ENCODE measurements at regions of chr7 and their contacts with region 1.

Region 1: GRCh38 chr7:120052884-120053382 is 220.0 kb upstream of the KCND2 start:
- DNase-seq: peak; percentile 79 to 97
- H3K4me3 ChIP-seq: peak overlapping the region; percentile 1; the same call in 1 of the 2 replicates
- H3K27ac ChIP-seq: peak overlapping the region; percentile 70
- H3K4me1 ChIP-seq: peaks cover 45% of the 10 kb centered on the region
- H3K27me3 ChIP-seq: no peaks in the 10 kb centered on the region
- CTCF ChIP-seq: no peak

Region 2: GRCh38 chr7:119545118-119545517 is 507.8 kb before region 1 on chr7:
- CTCF ChIA-PET with region 1: no interaction called
- POLR2A ChIA-PET with region 1: no interaction called
- intact Hi-C with region 1: loop called (anchors 5 kb)
- DNase-seq: peak in 1 of 2 experiments; percentile 86
- H3K4me3 ChIP-seq: no peak overlapping the region
- H3K27ac ChIP-seq: no peak overlapping the region
- H3K4me1 ChIP-seq: 0 out of 2 replicates have a peak, but pooled peaks cover 4% of the 10 kb centered on the region
- H3K27me3 ChIP-seq: peaks cover 17% of the 10 kb centered on the region
- CTCF ChIP-seq: no peak

Region 3: GRCh38 chr7:119861385-119861784 is 191.5 kb before region 1 on chr7:
- CTCF ChIA-PET with region 1: no interaction called
- POLR2A ChIA-PET with region 1: no interaction called
- intact Hi-C with region 1: no loop called
- DNase-seq: no peak
- H3K4me3 ChIP-seq: no peak overlapping the region
- H3K27ac ChIP-seq: no peak overlapping the region
- H3K4me1 ChIP-seq: no peaks in the 10 kb centered on the region
- H3K27me3 ChIP-seq: no peaks in the 10 kb centered on the region
- CTCF ChIP-seq: no peak

Region 4: GRCh38 chr7:119935418-119936025 is 117.4 kb before region 1 on chr7:
- CTCF ChIA-PET with region 1: interaction called, 3 read pairs
- POLR2A ChIA-PET with region 1: no interaction called
- intact Hi-C with region 1: loop called (anchors 10 kb)
- DNase-seq: no peak
- H3K4me3 ChIP-seq: no peak overlapping the region
- H3K27ac ChIP-seq: no peak overlapping the region
- H3K4me1 ChIP-seq: no peaks in the 10 kb centered on the region
- H3K27me3 ChIP-seq: no peaks in the 10 kb centered on the region
- CTCF ChIP-seq: peak; percentile 70

Region 5: DNA sequence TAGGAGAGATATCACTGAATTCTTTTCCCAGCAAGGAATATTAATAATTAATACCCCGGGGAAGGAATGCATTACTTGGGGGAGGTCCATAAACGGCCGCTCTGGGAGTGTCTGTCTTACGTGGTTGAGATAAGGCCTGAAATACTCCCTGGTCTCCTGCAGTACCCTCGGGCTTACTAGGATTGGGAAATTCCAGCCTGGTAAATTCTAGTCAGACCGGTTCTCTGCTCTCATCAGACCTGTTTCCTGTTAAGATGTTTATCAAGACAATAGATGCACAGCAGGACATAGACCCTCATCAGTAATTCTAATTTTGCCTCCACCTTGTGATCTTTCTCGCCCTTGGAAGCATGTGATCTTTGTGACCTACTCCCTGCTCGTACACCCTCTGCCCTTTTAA is 57.2 kb after region 1 on chr7:
- CTCF ChIA-PET with region 1: no interaction called
- POLR2A ChIA-PET with region 1: no interaction called
- intact Hi-C with region 1: loop called (anchors 2 kb)
- DNase-seq: peak; percentile 25 to 68
- H3K4me3 ChIP-seq: no peak overlapping the region
- H3K27ac ChIP-seq: no peak overlapping the region
- H3K4me1 ChIP-seq: peaks cover 15% of the 10 kb centered on the region
- H3K27me3 ChIP-seq: no peaks in the 10 kb centered on the region
- CTCF ChIP-seq: no peak

Region 6: GRCh38 chr7:120168066-120168465 is 115.1 kb after region 1 on chr7:
- CTCF ChIA-PET with region 1: no interaction called
- POLR2A ChIA-PET with region 1: no interaction called
- intact Hi-C with region 1: loop called (anchors 1 kb)
- DNase-seq: no peak
- H3K4me3 ChIP-seq: no peak overlapping the region
- H3K27ac ChIP-seq: no peak overlapping the region
- H3K4me1 ChIP-seq: peaks cover 26% of the 10 kb centered on the region
- H3K27me3 ChIP-seq: no peaks in the 10 kb centered on the region
- CTCF ChIP-seq: no peak

Region 7: DNA sequence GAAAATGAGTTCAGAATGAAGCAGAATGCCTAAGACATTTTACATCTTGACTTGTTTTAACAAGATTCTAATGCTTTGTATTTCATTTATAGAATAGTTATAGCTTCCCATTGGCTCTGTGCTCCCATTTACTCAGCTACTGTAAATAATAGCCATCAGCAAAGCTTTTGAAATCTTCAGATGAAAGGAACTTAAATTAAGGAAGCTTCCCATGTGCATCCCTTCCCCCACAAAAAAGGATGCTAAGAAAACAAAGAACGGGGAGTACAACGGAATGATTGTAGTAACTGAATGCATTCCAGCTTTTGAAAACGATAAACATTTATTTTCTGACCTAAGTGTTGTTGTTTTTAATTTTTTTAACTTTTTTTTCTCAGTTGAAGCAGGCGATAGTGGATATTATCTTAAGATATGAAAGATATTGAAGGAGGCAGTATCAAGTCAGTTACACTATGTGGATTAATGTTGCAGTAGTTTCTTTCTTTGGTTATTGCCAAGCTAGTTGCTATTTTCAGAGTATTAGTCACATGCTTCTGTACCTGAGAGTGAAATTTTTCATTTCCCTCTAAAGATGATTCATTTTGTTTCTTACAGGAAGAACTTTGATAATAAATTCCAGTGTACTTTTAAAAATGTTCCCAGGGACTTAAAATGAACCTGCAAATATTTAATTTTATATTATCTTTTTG is 349.3 kb after region 1 on chr7:
- CTCF ChIA-PET with region 1: no interaction called
- POLR2A ChIA-PET with region 1: no interaction called
- intact Hi-C with region 1: loop called (anchors 1 kb)
- DNase-seq: peak in 1 of 2 experiments; percentile 68
- H3K4me3 ChIP-seq: no peak overlapping the region
- H3K27ac ChIP-seq: peak overlapping the region; percentile 85
- H3K4me1 ChIP-seq: peaks cover 24% of the 10 kb centered on the region
- H3K27me3 ChIP-seq: no peaks in the 10 kb centered on the region
- CTCF ChIP-seq: no peak

Region 8: DNA sequence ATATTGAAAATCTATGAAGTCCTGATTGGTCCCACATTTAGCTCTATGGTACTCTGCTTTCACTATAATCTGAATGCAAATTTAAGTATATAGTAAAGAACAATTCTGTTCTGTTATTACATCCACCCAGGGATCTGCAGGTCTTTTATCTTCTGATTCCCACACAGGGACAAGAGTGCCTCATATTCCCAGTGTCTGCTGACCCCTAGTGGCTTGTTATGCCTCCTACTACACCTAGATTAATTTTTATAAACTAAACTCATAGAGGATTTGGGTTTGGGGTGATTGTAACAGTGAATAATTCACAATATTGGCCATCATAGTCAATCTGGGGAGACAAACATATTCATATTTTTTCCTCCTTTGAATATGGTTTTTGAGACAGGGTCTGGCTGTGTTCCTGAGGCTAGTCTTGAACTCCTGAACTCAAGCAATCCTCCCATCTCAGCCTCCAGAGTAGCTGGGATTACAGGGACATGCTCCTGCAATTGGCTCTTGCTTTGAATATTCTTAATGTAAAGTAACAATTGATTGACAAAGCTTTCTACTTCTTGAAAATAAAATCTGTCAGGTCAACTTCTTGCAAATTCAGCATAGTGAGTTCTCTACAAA is 502.1 kb after region 1 on chr7:
- CTCF ChIA-PET with region 1: no interaction called
- POLR2A ChIA-PET with region 1: no interaction called
- intact Hi-C with region 1: loop called (anchors 10 kb)
- DNase-seq: peak; percentile 42 to 47
- H3K4me3 ChIP-seq: no peak overlapping the region
- H3K27ac ChIP-seq: no peak overlapping the region
- H3K4me1 ChIP-seq: no peaks in the 10 kb centered on the region
- H3K27me3 ChIP-seq: no peaks in the 10 kb centered on the region
- CTCF ChIP-seq: peak; percentile 90

Region 9: GRCh38 chr7:120805636-120806388 is 752.9 kb after region 1 on chr7:
- CTCF ChIA-PET with region 1: no interaction called
- POLR2A ChIA-PET with region 1: no interaction called
- intact Hi-C with region 1: no loop called
- DNase-seq: peak in 1 of 2 experiments; percentile 51
- H3K4me3 ChIP-seq: no peak overlapping the region
- H3K27ac ChIP-seq: no peak overlapping the region
- H3K4me1 ChIP-seq: no peaks in the 10 kb centered on the region
- H3K27me3 ChIP-seq: no peaks in the 10 kb centered on the region
- CTCF ChIP-seq: peak; percentile 91

Measured in PC-9 (cell line).